ENCODE measurements at regions of chr2 and their contacts with region 1.

Region 1: DNA sequence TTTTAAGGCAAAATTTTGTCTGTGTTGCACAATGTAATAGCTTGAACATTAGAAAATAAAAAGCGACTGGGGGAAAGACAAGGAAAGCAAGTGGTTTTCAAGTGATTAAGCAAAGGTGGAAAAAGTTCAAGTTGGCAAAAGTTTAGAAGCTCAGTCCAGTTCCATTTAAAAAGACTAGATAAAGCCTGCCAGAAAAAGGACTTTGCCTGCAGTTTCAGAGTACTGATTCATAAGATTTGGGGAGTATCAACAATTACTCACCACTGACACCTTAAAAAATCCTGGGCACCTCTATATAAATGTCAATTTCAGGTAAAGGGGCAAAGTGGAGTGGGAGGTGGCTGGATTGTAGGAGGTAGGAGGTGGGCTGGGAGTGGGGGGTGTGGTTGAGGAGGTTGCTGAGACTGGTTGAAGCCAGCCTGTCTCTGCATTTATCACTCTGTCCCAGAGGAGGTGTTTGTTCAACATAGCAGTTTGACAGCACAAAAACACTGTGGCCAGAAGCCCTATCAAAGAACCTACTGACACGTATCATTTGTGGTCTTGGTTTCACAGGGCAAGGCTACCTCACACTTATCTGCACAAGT is 14.6 kb downstream of the ZEB2 start:
- DNase-seq: peak in 3 of 4 experiments; percentile 25 to 84 (median 66)
- ATAC-seq: peak; percentile 81
- H3K4me3 ChIP-seq: no peak overlapping the region
- H3K27ac ChIP-seq: peak overlapping the region; percentile 50
- H3K4me1 ChIP-seq: peaks cover 24 to 86% of the 10 kb centered on the region in 2 experiments
- H3K27me3 ChIP-seq: no peaks in the 10 kb centered on the region
- CTCF ChIP-seq: no peak
- EP300 ChIP-seq: peak; percentile 62; the same call in 1 of the 2 replicates
- POLR2A ChIP-seq: peak; percentile 39; the same call in 1 of the 2 replicates
- RAD21 ChIP-seq: no peak; a peak in 1 of 4 replicates

Region 2: GRCh38 chr2:144443837-144444817 is 61.2 kb before region 1 on chr2:
- CTCF ChIA-PET with region 1: no interaction called
- POLR2A ChIA-PET with region 1: interaction called, 5 read pairs
- in situ Hi-C with region 1: no loop called
- intact Hi-C with region 1: loop called (anchors 5 kb)
- DNase-seq: no peak
- ATAC-seq: peak; percentile 3; the same call in 1 of the 3 replicates
- H3K4me3 ChIP-seq: no peak overlapping the region
- H3K27ac ChIP-seq: peak overlapping the region; percentile 37; the same call in 1 of the 3 replicates
- H3K4me1 ChIP-seq: peaks cover 15 to 34% of the 10 kb centered on the region in 2 experiments
- H3K27me3 ChIP-seq: no peaks in the 10 kb centered on the region
- CTCF ChIP-seq: no peak
- EP300 ChIP-seq: no peak
- POLR2A ChIP-seq: no peak
- RAD21 ChIP-seq: no peak

Region 3: DNA sequence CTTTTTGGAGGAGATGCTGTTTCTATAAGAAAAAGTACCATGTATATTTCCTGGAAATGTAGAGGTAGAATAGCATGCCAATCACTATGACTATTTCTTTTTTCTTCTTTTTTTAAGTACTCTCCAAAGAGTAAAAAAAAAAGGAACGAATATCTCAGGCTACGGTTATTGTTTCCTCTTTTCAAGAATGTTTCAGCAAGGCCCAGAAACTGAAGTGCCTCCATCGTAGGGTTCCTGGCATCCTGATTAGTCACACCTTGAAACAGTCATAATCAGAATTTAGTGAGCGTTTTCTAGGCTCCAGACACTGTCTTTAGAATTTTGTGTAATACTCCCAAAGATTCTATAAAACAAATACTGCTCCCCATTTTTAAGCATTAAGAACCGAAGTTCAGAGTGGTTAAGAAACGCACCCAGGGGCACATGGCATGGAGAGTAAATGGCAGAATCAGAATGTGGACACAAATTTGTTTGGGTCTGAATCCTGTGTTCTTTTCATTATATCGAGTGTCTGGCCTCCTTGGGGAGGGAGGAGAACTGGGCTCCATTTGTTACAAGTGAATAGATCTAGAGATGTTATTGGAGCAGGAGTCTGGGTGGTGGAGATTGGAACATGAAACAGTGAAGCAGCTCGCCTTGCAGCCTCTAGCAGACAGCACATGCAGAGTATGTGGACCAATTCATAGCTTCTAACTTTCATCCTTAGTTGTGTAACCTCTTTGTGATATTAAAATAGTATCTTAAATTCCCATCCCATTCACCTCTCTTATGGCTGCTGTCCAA is 12.1 kb before region 1 on chr2:
- CTCF ChIA-PET with region 1: no interaction called
- POLR2A ChIA-PET with region 1: interaction called, 27 read pairs
- in situ Hi-C with region 1: no loop called
- intact Hi-C with region 1: no loop called
- DNase-seq: no peak
- ATAC-seq: no peak
- H3K4me3 ChIP-seq: no peak overlapping the region
- H3K27ac ChIP-seq: no peak overlapping the region
- H3K4me1 ChIP-seq: peaks cover 10 to 28% of the 10 kb centered on the region in 2 experiments; a peak in 4 of 5 replicates
- H3K27me3 ChIP-seq: no peaks in the 10 kb centered on the region
- CTCF ChIP-seq: no peak
- EP300 ChIP-seq: no peak
- POLR2A ChIP-seq: no peak
- RAD21 ChIP-seq: no peak

Region 4: DNA sequence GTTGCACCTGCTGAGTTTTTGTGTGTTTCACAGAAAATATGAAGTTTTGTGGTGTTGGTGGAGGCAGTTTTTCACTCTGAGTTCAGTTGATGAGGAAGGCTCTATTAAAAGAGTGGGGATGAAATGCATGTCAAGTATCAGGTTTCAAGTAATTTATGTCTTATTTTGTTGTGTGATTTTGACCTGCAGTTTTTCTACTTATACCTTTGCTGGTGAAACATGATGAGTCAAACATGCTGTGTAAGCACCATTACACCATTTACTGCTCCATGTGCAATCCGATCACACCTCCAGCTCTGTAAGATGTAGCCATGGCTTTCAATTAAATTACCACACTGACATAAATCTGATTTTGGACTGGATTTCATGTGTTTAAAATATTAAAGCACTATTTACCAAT is 189.1 kb after region 1 on chr2:
- CTCF ChIA-PET with region 1: no interaction called
- POLR2A ChIA-PET with region 1: no interaction called
- in situ Hi-C with region 1: no loop called
- intact Hi-C with region 1: no loop called
- DNase-seq: no peak
- ATAC-seq: peak; percentile 67
- H3K4me3 ChIP-seq: no peak overlapping the region
- H3K27ac ChIP-seq: no peak overlapping the region
- H3K4me1 ChIP-seq: no peaks in the 10 kb centered on the region; a peak in 1 of 5 replicates
- H3K27me3 ChIP-seq: no peaks in the 10 kb centered on the region
- CTCF ChIP-seq: no peak
- EP300 ChIP-seq: no peak
- POLR2A ChIP-seq: no peak
- RAD21 ChIP-seq: no peak

Region 5: DNA sequence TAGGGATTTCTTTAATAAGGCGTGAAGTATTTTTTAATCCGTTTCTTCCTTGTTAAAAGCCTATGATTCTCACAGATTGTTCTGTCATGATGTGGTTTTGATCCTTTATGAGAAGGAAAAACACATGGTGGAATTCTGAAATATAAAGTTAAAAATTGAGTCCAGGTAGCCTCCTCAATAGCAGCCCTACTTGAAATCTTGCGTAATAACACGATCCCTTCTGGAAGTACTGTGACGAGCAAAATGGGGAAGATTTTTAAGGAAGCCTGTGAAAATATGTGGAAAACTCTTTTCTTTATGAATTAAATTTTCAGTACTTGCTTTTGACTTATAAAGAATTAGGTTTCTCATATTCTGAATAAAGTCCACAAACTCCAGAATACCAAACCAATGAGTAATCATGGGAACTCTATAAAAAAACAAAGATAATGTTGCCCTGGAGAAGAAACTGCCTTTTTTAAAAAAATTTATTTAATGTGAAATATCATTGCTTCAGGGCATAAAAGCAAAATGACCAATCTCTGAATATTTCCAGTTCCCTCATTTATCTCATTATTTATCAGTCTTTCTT is 491.0 kb after region 1 on chr2:
- CTCF ChIA-PET with region 1: no interaction called
- POLR2A ChIA-PET with region 1: no interaction called
- in situ Hi-C with region 1: no loop called
- intact Hi-C with region 1: no loop called
- DNase-seq: no peak
- ATAC-seq: no peak
- H3K4me3 ChIP-seq: no peak overlapping the region
- H3K27ac ChIP-seq: no peak overlapping the region
- H3K4me1 ChIP-seq: no peaks in the 10 kb centered on the region
- H3K27me3 ChIP-seq: no peaks in the 10 kb centered on the region
- CTCF ChIP-seq: no peak
- EP300 ChIP-seq: no peak
- POLR2A ChIP-seq: no peak
- RAD21 ChIP-seq: no peak

Measured in K562 (cell line).